ENCODE measurements at regions of chr2 and their contacts with region 1.

Region 1: DNA sequence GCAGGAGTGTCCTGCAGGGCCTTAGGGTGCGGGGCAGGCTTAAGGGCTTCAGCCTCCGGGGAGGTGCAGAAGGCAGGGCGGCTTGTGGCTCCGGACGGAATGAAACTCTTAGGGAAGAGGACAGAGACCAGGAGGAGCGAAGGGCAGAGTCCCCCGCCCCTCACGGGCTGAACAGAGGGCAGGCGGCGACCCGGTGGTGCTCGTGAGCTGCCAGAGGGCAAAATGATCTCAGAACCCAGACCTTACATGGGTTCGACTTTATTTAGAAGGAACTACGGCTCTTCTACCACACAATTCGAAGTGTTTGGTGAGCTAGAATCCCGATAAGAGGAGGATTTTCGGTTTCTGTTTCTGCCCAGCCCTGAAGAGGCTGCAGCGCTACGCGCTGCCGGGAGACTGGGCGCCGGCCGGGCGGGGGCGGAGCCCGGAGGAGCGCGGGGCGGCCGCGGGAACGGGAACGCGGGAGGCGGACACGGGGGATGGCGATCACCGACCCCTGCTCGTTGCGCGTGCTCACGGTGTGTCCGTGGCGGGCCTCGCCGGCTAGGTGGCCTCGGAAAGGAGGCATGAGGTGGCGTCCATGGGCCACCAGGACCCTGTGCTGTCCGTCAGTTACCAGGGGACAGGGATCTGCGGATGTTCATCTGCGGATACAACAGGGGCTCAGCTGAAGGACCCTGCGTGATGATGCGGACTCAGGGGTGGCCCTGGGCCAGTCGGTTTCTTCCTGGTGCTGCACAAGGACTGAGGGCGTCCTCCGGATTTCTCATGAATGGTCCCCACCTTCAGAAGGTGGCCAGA is 4.2 kb upstream of the SP100 start:
- DNase-seq: peak; percentile 62
- ATAC-seq: peak; percentile 84
- H3K4me3 ChIP-seq: peak overlapping the region; percentile 74 to 82 (median 80)
- H3K27ac ChIP-seq: peak overlapping the region; percentile 77
- H3K4me1 ChIP-seq: peaks cover 48% of the 10 kb centered on the region
- H3K27me3 ChIP-seq: no peaks in the 10 kb centered on the region; a peak in 1 of 5 replicates
- CTCF ChIP-seq: 0 out of 2 replicates have a peak, but pooled peaks have one; percentile 3
- EP300 ChIP-seq: no peak
- POLR2A ChIP-seq: peak; percentile 70 to 89
- RAD21 ChIP-seq: peak; percentile 57; the same call in 1 of the 2 replicates

Region 2: GRCh38 chr2:230219419-230220331 is 192.1 kb before region 1 on chr2 and contains the start of gene SP110:
- CTCF ChIA-PET with region 1: no interaction called
- POLR2A ChIA-PET with region 1: no interaction called
- in situ Hi-C with region 1: no loop called
- intact Hi-C with region 1: loop called (anchors 10 kb)
- DNase-seq: peak; percentile 65
- ATAC-seq: peak; percentile 95
- H3K4me3 ChIP-seq: peak within 1 kb of the TSS; percentile 75 to 97 (median 89)
- H3K27ac ChIP-seq: peak within 1 kb of the TSS; percentile 43
- H3K4me1 ChIP-seq: peaks cover 17% of the 10 kb centered on the region
- H3K27me3 ChIP-seq: no peaks in the 10 kb centered on the region; a peak in 1 of 5 replicates
- CTCF ChIP-seq: no peak
- EP300 ChIP-seq: no peak
- POLR2A ChIP-seq: peak; percentile 78 to 80
- RAD21 ChIP-seq: no peak
- total RNA-seq, gene SP110: 9.8 and 10.4 TPM in 2 replicates

Region 3: DNA sequence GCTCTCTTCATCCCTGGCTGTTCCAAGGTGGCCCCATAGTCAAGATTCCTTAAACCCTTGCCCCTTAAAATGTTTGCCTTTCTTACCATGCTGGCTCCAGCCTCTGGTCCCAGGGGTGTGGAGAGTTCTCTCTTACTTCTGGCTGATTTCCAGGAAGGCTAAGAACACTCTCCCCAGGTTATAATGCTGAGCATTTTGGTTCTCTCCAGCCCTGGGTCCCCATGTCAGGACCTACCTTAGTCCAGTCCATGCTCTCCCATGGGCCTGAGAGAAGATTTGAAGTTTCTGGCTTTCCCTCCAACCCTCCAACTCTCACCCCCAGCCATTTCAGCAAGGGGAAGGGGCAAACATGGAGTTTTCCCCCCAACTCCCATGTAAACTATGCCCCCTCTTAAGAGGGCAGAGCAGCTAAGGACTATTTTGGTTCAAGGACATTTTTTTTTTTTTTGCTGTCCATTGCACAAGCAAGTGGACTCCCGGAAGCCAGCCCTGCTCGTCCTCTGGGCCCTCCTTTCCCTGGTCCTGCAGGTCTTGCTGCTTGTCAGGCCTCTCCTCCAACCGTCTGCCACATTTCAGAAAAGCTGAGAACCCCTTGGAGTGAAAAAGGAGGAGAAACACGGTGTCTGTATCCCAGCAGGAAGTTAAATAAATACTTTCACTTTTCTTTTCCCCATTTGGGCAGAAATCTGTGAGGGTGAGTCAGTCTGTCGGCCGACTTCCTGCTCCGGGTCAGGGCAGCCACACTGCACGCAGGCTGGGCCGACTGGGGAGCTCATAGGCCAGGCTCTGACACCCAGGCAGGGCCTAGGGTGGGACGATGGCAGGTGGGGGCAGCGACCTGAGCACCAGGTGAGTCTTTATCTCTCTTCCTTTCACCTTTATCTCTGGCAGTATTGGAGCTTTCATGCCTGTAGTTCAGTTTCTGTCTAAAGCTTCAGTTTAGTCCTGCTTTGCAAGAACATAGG is 85.0 kb before region 1 on chr2 and contains the start of gene SP140L:
- CTCF ChIA-PET with region 1: no interaction called
- POLR2A ChIA-PET with region 1: interaction called, 10 read pairs
- in situ Hi-C with region 1: loop called (anchors 5 kb)
- intact Hi-C with region 1: loop called (anchors 2 kb)
- DNase-seq: peak; percentile 82
- ATAC-seq: peak; percentile 95
- H3K4me3 ChIP-seq: peak within 1 kb of the TSS; percentile 64 to 74 (median 71)
- H3K27ac ChIP-seq: peak within 1 kb of the TSS; percentile 80
- H3K4me1 ChIP-seq: peaks cover 64% of the 10 kb centered on the region
- H3K27me3 ChIP-seq: no peaks in the 10 kb centered on the region; a peak in 1 of 5 replicates
- CTCF ChIP-seq: no peak
- EP300 ChIP-seq: no peak; a peak in 1 of 4 replicates
- POLR2A ChIP-seq: peak; percentile 64 to 78
- RAD21 ChIP-seq: 0 out of 2 replicates have a peak, but pooled peaks have one; percentile 19
- total RNA-seq, gene SP140L: 13.2 and 17.5 TPM in 2 replicates

Region 4: DNA sequence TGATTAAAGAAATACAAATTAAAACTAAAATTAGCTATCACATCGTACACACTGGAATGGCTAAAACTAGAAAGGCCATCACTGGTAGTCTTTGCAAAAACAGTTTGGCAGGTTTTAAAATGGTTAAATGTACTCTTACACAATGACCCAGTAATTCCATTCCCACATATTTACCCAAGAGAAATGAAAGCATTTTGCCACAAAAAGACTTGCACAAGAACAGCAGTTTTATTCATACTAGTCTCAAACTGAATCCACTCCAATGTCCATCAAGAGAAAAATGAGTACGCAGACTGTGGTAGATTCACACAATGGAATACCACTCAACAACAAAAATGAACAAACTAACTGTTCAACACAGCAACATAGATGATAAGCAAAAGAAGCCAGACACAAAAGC is 55.7 kb before region 1 on chr2:
- CTCF ChIA-PET with region 1: no interaction called
- POLR2A ChIA-PET with region 1: no interaction called
- in situ Hi-C with region 1: no loop called
- intact Hi-C with region 1: loop called (anchors 5 kb)
- DNase-seq: peak; percentile 84
- ATAC-seq: peak; percentile 89
- H3K4me3 ChIP-seq: no peak overlapping the region
- H3K27ac ChIP-seq: peak overlapping the region; percentile 25
- H3K4me1 ChIP-seq: peaks cover 16% of the 10 kb centered on the region
- H3K27me3 ChIP-seq: no peaks in the 10 kb centered on the region
- CTCF ChIP-seq: no peak
- EP300 ChIP-seq: peak in 1 of 2 experiments; percentile 72; a peak in 2 of 4 replicates
- POLR2A ChIP-seq: no peak
- RAD21 ChIP-seq: no peak

Region 5: DNA sequence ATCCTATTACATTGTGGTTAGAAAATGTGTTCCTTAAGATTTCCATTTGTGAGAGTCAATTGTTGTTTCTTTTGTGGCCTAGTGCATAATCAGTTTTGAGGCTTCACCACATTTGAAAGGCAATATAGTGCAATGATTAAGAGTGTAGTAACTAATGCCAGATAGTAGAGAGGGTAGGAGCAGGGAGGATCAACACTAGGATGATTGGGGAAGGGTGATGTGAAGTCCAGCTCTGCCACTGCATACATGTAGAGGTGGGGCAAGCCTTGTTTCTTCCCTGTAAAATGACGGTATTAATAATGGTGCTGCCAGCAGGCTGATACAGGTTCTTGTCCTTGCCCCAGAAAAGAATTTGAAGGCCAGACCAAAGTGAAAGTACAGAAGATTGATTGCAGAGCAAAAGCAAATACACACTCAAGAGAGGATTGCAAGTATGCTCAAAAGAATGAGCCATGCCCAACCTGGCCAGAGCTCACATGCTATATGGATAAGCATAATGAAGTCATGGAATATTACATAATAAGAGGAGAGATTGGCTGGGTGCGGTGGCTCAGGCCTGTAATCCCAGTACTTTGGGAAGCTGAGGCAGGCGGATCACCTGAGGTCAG is 12.2 kb after region 1 on chr2:
- CTCF ChIA-PET with region 1: no interaction called
- POLR2A ChIA-PET with region 1: interaction called, 5 read pairs
- in situ Hi-C with region 1: no loop called
- intact Hi-C with region 1: loop called (anchors 1 kb)
- DNase-seq: peak; percentile 79
- ATAC-seq: peak; percentile 98
- H3K4me3 ChIP-seq: no peak overlapping the region
- H3K27ac ChIP-seq: peak overlapping the region; percentile 13
- H3K4me1 ChIP-seq: peaks cover 21% of the 10 kb centered on the region
- H3K27me3 ChIP-seq: no peaks in the 10 kb centered on the region
- CTCF ChIP-seq: no peak
- EP300 ChIP-seq: peak in 1 of 2 experiments; percentile 24; a peak in 1 of 4 replicates
- POLR2A ChIP-seq: no peak
- RAD21 ChIP-seq: no peak

Region 6: GRCh38 chr2:230492101-230492500 is 80.3 kb after region 1 on chr2:
- CTCF ChIA-PET with region 1: no interaction called
- POLR2A ChIA-PET with region 1: no interaction called
- in situ Hi-C with region 1: no loop called
- intact Hi-C with region 1: no loop called
- DNase-seq: peak; percentile 8
- ATAC-seq: peak; percentile 52
- H3K4me3 ChIP-seq: no peak overlapping the region
- H3K27ac ChIP-seq: no peak overlapping the region
- H3K4me1 ChIP-seq: peaks cover 9% of the 10 kb centered on the region
- H3K27me3 ChIP-seq: no peaks in the 10 kb centered on the region
- CTCF ChIP-seq: no peak
- EP300 ChIP-seq: no peak
- POLR2A ChIP-seq: no peak
- RAD21 ChIP-seq: no peak

Measured in HepG2 (cell line).